ENCODE measurements at regions of chr9 and their contacts with region 1.

Region 1: GRCh38 chr9:35790385-35791296 is 750 bp upstream of the NPR2 start:
- DNase-seq: no peak
- ATAC-seq: peak; percentile 98
- H3K4me3 ChIP-seq: no peak overlapping the region
- H3K27ac ChIP-seq: no peak overlapping the region
- H3K4me1 ChIP-seq: no peaks in the 10 kb centered on the region
- H3K27me3 ChIP-seq: no peaks in the 10 kb centered on the region
- CTCF ChIP-seq: peak; percentile 84 to 94 (median 91)
- EP300 ChIP-seq: no peak
- POLR2A ChIP-seq: no peak
- RAD21 ChIP-seq: peak; percentile 83

Region 2: GRCh38 chr9:35711501-35712428 is 78.9 kb before region 1 on chr9:
- CTCF ChIA-PET with region 1: no interaction called
- POLR2A ChIA-PET with region 1: no interaction called
- RAD21 ChIA-PET with region 1: no interaction called
- SMC1A ChIA-PET with region 1: no interaction called
- in situ Hi-C with region 1: no loop called
- intact Hi-C with region 1: no loop called
- DNase-seq: no peak
- ATAC-seq: peak; percentile 70
- H3K4me3 ChIP-seq: no peak overlapping the region
- H3K27ac ChIP-seq: no peak overlapping the region
- H3K4me1 ChIP-seq: peaks cover 14% of the 10 kb centered on the region
- H3K27me3 ChIP-seq: no peaks in the 10 kb centered on the region
- CTCF ChIP-seq: no peak
- EP300 ChIP-seq: no peak
- POLR2A ChIP-seq: no peak
- RAD21 ChIP-seq: no peak

Region 3: GRCh38 chr9:35756275-35757225 is 34.1 kb before region 1 on chr9:
- CTCF ChIA-PET with region 1: interaction called, 16 read pairs
- POLR2A ChIA-PET with region 1: no interaction called
- RAD21 ChIA-PET with region 1: no interaction called
- SMC1A ChIA-PET with region 1: interaction called, 3 read pairs
- in situ Hi-C with region 1: no loop called
- intact Hi-C with region 1: no loop called
- DNase-seq: no peak
- ATAC-seq: peak; percentile 86
- H3K4me3 ChIP-seq: peak overlapping the region; percentile 87
- H3K27ac ChIP-seq: peak overlapping the region; percentile 98
- H3K4me1 ChIP-seq: peaks cover 22% of the 10 kb centered on the region
- H3K27me3 ChIP-seq: no peaks in the 10 kb centered on the region
- CTCF ChIP-seq: peak; percentile 76 to 94 (median 82)
- EP300 ChIP-seq: no peak
- POLR2A ChIP-seq: no peak; the same call in none of the 2 replicates
- RAD21 ChIP-seq: peak; percentile 59

Region 4: GRCh38 chr9:35771534-35771933 is 19.1 kb before region 1 on chr9:
- CTCF ChIA-PET with region 1: interaction called, 23 read pairs
- POLR2A ChIA-PET with region 1: no interaction called
- RAD21 ChIA-PET with region 1: no interaction called
- SMC1A ChIA-PET with region 1: interaction called, 7 read pairs
- in situ Hi-C with region 1: no loop called
- intact Hi-C with region 1: no loop called
- DNase-seq: no peak
- ATAC-seq: no peak
- H3K4me3 ChIP-seq: no peak overlapping the region
- H3K27ac ChIP-seq: no peak overlapping the region
- H3K4me1 ChIP-seq: no peaks in the 10 kb centered on the region
- H3K27me3 ChIP-seq: no peaks in the 10 kb centered on the region
- CTCF ChIP-seq: no peak
- EP300 ChIP-seq: no peak
- POLR2A ChIP-seq: no peak
- RAD21 ChIP-seq: no peak

Region 5: GRCh38 chr9:35778496-35778895 is 12.1 kb before region 1 on chr9:
- CTCF ChIA-PET with region 1: interaction called, 10 read pairs
- POLR2A ChIA-PET with region 1: no interaction called
- RAD21 ChIA-PET with region 1: interaction called, 4 read pairs
- SMC1A ChIA-PET with region 1: interaction called, 8 read pairs
- in situ Hi-C with region 1: no loop called
- intact Hi-C with region 1: no loop called
- DNase-seq: no peak
- ATAC-seq: no peak
- H3K4me3 ChIP-seq: no peak overlapping the region
- H3K27ac ChIP-seq: no peak overlapping the region
- H3K4me1 ChIP-seq: no peaks in the 10 kb centered on the region
- H3K27me3 ChIP-seq: no peaks in the 10 kb centered on the region
- CTCF ChIP-seq: no peak
- EP300 ChIP-seq: no peak
- POLR2A ChIP-seq: no peak
- RAD21 ChIP-seq: no peak

Region 6: GRCh38 chr9:35903049-35903448 is 112.4 kb after region 1 on chr9:
- CTCF ChIA-PET with region 1: interaction called, 11 read pairs
- POLR2A ChIA-PET with region 1: no interaction called
- RAD21 ChIA-PET with region 1: interaction called, 4 read pairs
- SMC1A ChIA-PET with region 1: interaction called, 3 read pairs
- in situ Hi-C with region 1: no loop called
- intact Hi-C with region 1: no loop called
- DNase-seq: no peak
- ATAC-seq: peak; percentile 84
- H3K4me3 ChIP-seq: no peak overlapping the region
- H3K27ac ChIP-seq: no peak overlapping the region
- H3K4me1 ChIP-seq: no peaks in the 10 kb centered on the region
- H3K27me3 ChIP-seq: peaks cover 0 to 1% of the 10 kb centered on the region in 2 experiments; a peak in 2 of 4 replicates
- CTCF ChIP-seq: peak; percentile 53 to 73 (median 68); a peak in 5 of 6 replicates
- EP300 ChIP-seq: no peak
- POLR2A ChIP-seq: no peak
- RAD21 ChIP-seq: peak; percentile 65